Body of pancreas (tissue), 4 donors: ENCODE measurements at regions of chr4 and their contacts with region 1.

Region 1: GRCh38 chr4:26319467-26319948 is 1.3 kb upstream of the RBPJ start:
- DNase-seq: peak; percentile 99 to 100 (median 100)
- ATAC-seq: peak; percentile 89
- H3K4me3 ChIP-seq: peak overlapping the region; percentile 84 to 86
- H3K27ac ChIP-seq: peak overlapping the region; percentile 95 to 99 (median 98)
- H3K4me1 ChIP-seq: peaks cover 23% of the 10 kb centered on the region
- H3K27me3 ChIP-seq: no peaks in the 10 kb centered on the region
- CTCF ChIP-seq: peak in 3 of 7 experiments; percentile 18 to 34 (median 30)
- POLR2A ChIP-seq: peak in 2 of 3 donors; percentile 49 to 53

Region 2: GRCh38 chr4:25811140-25811690 is 508.3 kb before region 1 on chr4:
- intact Hi-C with region 1: no loop called
- DNase-seq: no peak
- ATAC-seq: no peak
- H3K4me3 ChIP-seq: no peak overlapping the region
- H3K27ac ChIP-seq: peak overlapping the region in 3 of 4 donors; percentile 42 to 50 (median 48)
- H3K4me1 ChIP-seq: peaks cover 40% of the 10 kb centered on the region
- H3K27me3 ChIP-seq: no peaks in the 10 kb centered on the region
- CTCF ChIP-seq: no peak
- POLR2A ChIP-seq: no peak

Region 3: GRCh38 chr4:26083987-26084386 is 235.5 kb before region 1 on chr4:
- intact Hi-C with region 1: no loop called
- DNase-seq: peak in 1 of 4 donors; percentile 11
- ATAC-seq: peak; percentile 43
- H3K4me3 ChIP-seq: no peak overlapping the region
- H3K27ac ChIP-seq: no peak overlapping the region
- H3K4me1 ChIP-seq: no peaks in the 10 kb centered on the region
- H3K27me3 ChIP-seq: no peaks in the 10 kb centered on the region
- CTCF ChIP-seq: no peak
- POLR2A ChIP-seq: no peak

Region 4: GRCh38 chr4:26217961-26218676 is 101.4 kb before region 1 on chr4:
- intact Hi-C with region 1: loop called (anchors 10 kb)
- DNase-seq: peak in 1 of 4 donors; percentile 47
- ATAC-seq: no peak
- H3K4me3 ChIP-seq: no peak overlapping the region
- H3K27ac ChIP-seq: peak overlapping the region in 1 of 4 donors; percentile 61
- H3K4me1 ChIP-seq: no peaks in the 10 kb centered on the region
- H3K27me3 ChIP-seq: no peaks in the 10 kb centered on the region
- CTCF ChIP-seq: no peak
- POLR2A ChIP-seq: no peak

Region 5: DNA sequence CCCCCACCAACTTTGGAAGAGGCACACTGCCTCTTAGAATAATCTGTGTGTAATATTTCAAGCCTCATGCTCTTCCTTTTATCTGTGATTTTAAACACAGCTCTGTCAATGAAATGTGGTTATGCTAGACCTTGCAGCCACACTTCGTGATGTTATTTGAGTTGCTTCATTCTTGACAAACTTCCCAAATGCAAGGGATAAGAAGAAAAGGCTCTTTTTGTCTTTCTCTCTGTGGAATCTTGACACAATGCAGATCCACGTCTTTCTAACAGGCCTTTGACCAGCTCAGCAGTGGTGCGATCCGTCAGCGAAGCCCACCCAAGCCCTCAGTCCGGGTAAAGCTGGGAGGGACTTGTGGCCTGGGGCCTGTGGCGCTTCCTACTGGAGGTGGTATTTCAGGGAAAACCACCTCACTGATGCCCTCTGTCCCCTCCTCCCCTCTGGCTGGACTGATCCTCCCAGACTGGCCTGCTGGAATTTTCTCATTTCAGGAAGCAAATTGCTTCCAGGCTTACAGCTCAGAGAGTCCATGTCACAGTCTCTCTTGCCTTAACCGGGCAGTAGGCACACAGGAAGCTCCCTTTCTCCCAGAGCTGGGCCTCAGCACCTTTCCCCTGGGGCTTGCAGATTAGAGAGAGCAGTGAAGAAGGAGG is 190.3 kb after region 1 on chr4:
- intact Hi-C with region 1: no loop called
- DNase-seq: no peak
- ATAC-seq: no peak
- H3K4me3 ChIP-seq: no peak overlapping the region
- H3K27ac ChIP-seq: no peak overlapping the region
- H3K4me1 ChIP-seq: no peaks in the 10 kb centered on the region
- H3K27me3 ChIP-seq: no peaks in the 10 kb centered on the region
- CTCF ChIP-seq: no peak
- POLR2A ChIP-seq: no peak

Region 6: GRCh38 chr4:27084685-27085361 is 765.3 kb after region 1 on chr4:
- intact Hi-C with region 1: no loop called
- DNase-seq: peak in 3 of 4 donors; percentile 18 to 61 (median 20)
- ATAC-seq: no peak
- H3K4me3 ChIP-seq: peak overlapping the region in 1 of 2 donors; percentile 8
- H3K27ac ChIP-seq: no peak overlapping the region
- H3K4me1 ChIP-seq: peaks cover 10% of the 10 kb centered on the region
- H3K27me3 ChIP-seq: peaks cover 0 to 21% of the 10 kb centered on the region in 2 donors
- CTCF ChIP-seq: peak in 3 of 7 experiments; percentile 7 to 27 (median 19)
- POLR2A ChIP-seq: no peak